Activated CD4-positive, alpha-beta T cell treated with anti-CD3 and anti-CD28 coated beads, Interleukin-2, amount 10 ng/mL, durations not matched to agents 7 days and 5 days (primary cell): ENCODE measurements at regions of chr17 and their contacts with region 1.

Region 1: DNA sequence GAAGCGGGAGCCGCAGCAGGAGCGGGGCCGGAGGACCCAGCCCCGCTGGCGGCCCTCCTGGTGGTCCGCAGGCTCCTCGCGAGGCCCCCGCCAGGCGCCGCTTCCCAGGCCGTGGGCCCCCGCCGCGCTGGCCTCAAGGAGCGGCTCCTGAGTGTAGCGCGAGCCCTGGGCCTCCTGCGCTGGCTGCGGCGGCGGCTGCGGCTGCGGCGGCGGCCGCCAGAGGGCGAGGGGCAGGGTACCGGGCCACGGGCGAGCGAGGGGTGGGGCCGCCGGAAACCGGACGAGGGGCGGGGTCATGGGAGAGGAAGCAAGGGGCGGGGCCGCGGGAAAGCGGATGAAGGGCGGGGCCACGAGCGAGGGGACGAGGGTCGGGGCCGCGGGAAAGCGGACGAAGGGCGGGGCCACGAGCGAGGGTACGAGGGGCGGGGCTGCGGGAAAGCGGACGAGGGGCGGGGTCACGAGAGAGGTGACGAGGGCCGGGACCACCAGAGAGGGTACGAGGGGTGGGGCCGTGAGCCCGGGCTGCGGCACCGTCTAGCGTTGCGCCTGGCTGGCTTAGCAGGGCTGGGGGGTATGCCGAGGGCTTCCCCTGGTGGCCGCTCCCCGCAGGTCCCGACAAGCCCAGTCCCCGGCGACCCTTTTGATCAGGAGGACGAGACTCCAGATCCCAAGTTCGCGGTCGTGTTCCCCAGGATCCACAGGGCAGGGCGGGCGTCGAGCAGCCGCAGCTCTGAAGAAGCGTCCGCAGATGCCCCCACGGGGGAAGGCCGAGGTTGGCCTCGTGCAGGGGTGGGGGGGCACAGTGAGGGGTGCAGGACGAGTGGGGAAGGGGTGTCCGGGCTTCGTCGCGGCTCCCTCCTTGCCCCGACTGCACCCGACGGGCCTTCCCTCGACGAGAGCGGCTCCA is 1.7 kb downstream of the MYO15B start:
- DNase-seq: peak; percentile 96
- H3K4me3 Mint-ChIP-seq: peak overlapping the region; percentile 68
- H3K27ac Mint-ChIP-seq: peak overlapping the region; percentile 86
- H3K4me1 Mint-ChIP-seq: peaks cover 10% of the 10 kb centered on the region
- H3K27me3 Mint-ChIP-seq: peaks cover 24% of the 10 kb centered on the region

Region 2: DNA sequence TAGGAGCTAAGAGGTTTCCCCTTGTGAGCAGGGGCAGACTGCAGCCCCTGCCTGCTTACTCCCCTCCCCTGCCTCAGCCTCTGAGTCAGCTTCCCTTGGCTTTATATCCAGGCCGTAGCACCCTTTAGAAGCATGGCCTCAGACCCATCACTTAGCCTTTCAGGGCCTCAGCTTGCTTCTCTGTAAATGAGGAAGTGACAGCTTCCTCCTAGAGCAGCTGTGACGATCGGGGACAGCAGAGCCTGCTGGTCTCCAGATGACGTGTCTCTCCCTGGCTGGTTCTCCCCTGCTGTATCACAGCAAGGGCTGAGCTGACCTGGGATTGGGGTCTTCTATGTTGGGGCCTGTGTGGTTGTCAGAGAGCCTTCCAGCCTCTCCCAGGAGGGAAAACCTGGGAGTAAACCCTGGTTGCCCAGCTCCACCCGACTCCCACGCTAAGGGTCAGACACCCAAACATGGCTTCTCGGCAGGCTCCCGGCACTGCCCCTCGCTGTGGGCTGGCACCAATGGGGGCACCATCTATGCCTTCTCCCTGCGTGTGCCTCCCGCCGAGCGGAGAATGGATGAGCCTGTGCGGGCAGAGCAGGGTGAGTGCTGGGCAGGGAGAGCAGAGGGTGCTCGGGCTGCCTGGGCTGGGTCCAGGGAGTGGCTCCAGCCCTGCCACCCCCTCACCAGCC is 17.9 kb before region 1 on chr17:
- CTCF ChIA-PET with region 1: no interaction called
- POLR2A ChIA-PET with region 1: no interaction called
- DNase-seq: peak; percentile 48
- H3K4me3 Mint-ChIP-seq: no peak overlapping the region
- H3K27ac Mint-ChIP-seq: peak overlapping the region; percentile 86
- H3K4me1 Mint-ChIP-seq: peaks cover 6% of the 10 kb centered on the region
- H3K27me3 Mint-ChIP-seq: no peaks in the 10 kb centered on the region

Region 3: GRCh38 chr17:75601057-75602051 is 12.1 kb after region 1 on chr17:
- CTCF ChIA-PET with region 1: interaction called, 11 read pairs
- POLR2A ChIA-PET with region 1: no interaction called
- DNase-seq: peak; percentile 68
- H3K4me3 Mint-ChIP-seq: no peak overlapping the region
- H3K27ac Mint-ChIP-seq: no peak overlapping the region
- H3K4me1 Mint-ChIP-seq: no peaks in the 10 kb centered on the region
- H3K27me3 Mint-ChIP-seq: no peaks in the 10 kb centered on the region

Region 4: DNA sequence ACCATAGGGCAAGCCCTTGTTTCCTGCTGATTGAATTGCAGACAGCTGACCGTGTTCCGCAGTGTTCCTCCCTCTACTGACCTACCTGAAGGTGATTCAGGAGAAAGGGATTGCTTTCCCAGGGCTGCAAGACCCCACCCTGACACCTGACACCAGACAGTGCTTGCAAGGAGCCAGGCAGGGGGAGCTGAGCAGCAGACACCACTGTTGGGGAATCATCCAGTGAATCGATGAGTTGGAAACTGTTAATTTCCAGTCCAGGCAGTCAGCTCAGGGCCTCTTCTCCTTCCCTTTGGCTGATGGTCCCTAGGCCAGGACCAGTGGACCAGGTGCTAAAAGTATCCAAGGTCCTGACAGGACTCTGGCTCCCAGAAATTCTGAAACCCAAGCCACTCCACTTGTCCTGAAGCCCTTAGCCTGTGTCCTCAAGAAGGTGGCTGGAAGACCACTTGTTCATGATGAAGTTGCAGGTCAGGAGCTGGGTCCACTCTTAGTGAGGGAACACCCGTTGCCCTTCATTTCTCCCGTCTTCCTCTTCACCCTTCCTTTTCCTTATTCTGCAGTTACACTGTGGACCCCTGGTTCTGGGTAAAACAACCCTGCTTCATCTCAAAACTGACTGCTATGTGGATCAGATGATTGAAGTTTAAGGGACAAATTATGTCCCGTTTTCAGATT is 185.9 kb after region 1 on chr17:
- CTCF ChIA-PET with region 1: no interaction called
- POLR2A ChIA-PET with region 1: no interaction called
- DNase-seq: no peak
- H3K4me3 Mint-ChIP-seq: no peak overlapping the region
- H3K27ac Mint-ChIP-seq: peak overlapping the region; percentile 22
- H3K4me1 Mint-ChIP-seq: peaks cover 30% of the 10 kb centered on the region
- H3K27me3 Mint-ChIP-seq: peaks cover 2% of the 10 kb centered on the region

Region 5: DNA sequence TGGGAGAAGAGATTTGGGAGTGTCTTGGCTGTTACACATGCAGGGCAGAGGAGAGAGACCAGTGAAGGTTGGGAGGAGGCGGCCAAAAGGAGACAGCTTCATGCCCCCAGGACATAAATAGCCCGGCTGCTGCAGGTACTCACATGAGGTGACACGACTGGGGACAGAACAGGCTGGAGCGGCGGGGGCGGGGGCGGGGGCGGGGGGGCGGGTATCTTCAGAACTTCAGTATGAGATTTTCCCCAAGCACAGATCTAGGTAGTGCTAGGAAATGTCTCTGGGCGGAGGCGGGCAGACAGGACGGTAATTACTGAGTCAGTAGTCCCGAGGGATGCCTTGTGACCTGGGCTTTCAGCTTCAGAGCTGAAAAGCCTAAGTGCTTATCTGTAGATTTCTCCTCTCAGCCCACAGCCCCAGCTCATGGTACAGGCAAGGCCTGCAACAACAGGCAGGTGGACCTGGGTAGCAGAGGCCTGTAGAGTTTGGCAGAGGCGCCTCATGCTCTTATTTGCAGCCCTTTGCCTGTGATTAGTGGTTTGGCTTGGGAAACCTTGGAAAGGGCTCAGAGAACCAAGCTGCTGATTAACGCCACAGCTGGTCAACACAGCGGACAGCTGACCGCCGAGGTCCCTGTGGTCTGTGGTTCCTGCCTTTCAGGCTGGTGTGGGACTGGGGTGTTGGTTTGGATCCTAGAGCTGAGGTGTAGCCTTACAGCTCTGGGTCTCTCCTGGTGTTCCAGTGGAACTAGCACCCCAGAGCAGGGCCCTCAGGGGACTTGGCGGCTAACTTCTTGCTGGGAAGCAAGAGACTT is 219.8 kb after region 1 on chr17:
- CTCF ChIA-PET with region 1: no interaction called
- POLR2A ChIA-PET with region 1: no interaction called
- DNase-seq: no peak
- H3K4me3 Mint-ChIP-seq: no peak overlapping the region
- H3K27ac Mint-ChIP-seq: no peak overlapping the region
- H3K4me1 Mint-ChIP-seq: peaks cover 3% of the 10 kb centered on the region
- H3K27me3 Mint-ChIP-seq: no peaks in the 10 kb centered on the region